HepG2 (cell line): ENCODE measurements at regions of chr11 and their contacts with region 1.

Region 1: GRCh38 chr11:119067371-119068222 is at the start of gene VPS11:
- DNase-seq: peak; percentile 92
- ATAC-seq: peak; percentile 98
- H3K4me3 ChIP-seq: peak within 1 kb of the TSS; percentile 97 to 98 (median 97)
- H3K27ac ChIP-seq: peak within 1 kb of the TSS; percentile 83
- H3K4me1 ChIP-seq: peaks cover 25% of the 10 kb centered on the region
- H3K27me3 ChIP-seq: no peaks in the 10 kb centered on the region; a peak in 1 of 5 replicates
- CTCF ChIP-seq: peak; percentile 12; the same call in 1 of the 2 replicates
- EP300 ChIP-seq: peak in 1 of 2 experiments; percentile 20; a peak in 1 of 4 replicates
- POLR2A ChIP-seq: peak; percentile 70 to 82
- RAD21 ChIP-seq: no peak
- total RNA-seq, gene VPS11: 21.6 and 23.3 TPM in 2 replicates

Region 2: GRCh38 chr11:119018074-119018938 is 49.3 kb before region 1 on chr11 and contains the starts of genes RPS25 and TRAPPC4:
- CTCF ChIA-PET with region 1: no interaction called
- POLR2A ChIA-PET with region 1: interaction called, 11 read pairs
- in situ Hi-C with region 1: no loop called
- intact Hi-C with region 1: no loop called
- DNase-seq: peak; percentile 93
- ATAC-seq: peak; percentile 88
- H3K4me3 ChIP-seq: peak within 1 kb of the TSS; percentile 72 to 99 (median 93)
- H3K27ac ChIP-seq: peak within 1 kb of the TSS; percentile 93
- H3K4me1 ChIP-seq: peaks cover 60% of the 10 kb centered on the region
- H3K27me3 ChIP-seq: peaks cover 0 to 4% of the 10 kb centered on the region in 2 experiments; a peak in 2 of 5 replicates
- CTCF ChIP-seq: peak; percentile 53
- EP300 ChIP-seq: peak in 1 of 2 experiments; percentile 41; a peak in 1 of 4 replicates
- POLR2A ChIP-seq: peak; percentile 86 to 88
- RAD21 ChIP-seq: 0 out of 2 replicates have a peak, but pooled peaks have one; percentile 4
- total RNA-seq, gene RPS25: 1,415 and 1,643 TPM in 2 replicates
- total RNA-seq, gene TRAPPC4: 97.4 and 124 TPM in 2 replicates

Region 3: GRCh38 chr11:119023741-119024140 is 43.9 kb before region 1 on chr11:
- CTCF ChIA-PET with region 1: no interaction called
- POLR2A ChIA-PET with region 1: interaction called, 11 read pairs
- in situ Hi-C with region 1: no loop called
- intact Hi-C with region 1: no loop called
- DNase-seq: no peak
- ATAC-seq: no peak
- H3K4me3 ChIP-seq: no peak overlapping the region
- H3K27ac ChIP-seq: peak overlapping the region; percentile 77
- H3K4me1 ChIP-seq: peaks cover 92% of the 10 kb centered on the region
- H3K27me3 ChIP-seq: peaks cover 0 to 3% of the 10 kb centered on the region in 2 experiments; a peak in 2 of 5 replicates
- CTCF ChIP-seq: no peak
- EP300 ChIP-seq: no peak
- POLR2A ChIP-seq: no peak
- RAD21 ChIP-seq: no peak

Region 4: DNA sequence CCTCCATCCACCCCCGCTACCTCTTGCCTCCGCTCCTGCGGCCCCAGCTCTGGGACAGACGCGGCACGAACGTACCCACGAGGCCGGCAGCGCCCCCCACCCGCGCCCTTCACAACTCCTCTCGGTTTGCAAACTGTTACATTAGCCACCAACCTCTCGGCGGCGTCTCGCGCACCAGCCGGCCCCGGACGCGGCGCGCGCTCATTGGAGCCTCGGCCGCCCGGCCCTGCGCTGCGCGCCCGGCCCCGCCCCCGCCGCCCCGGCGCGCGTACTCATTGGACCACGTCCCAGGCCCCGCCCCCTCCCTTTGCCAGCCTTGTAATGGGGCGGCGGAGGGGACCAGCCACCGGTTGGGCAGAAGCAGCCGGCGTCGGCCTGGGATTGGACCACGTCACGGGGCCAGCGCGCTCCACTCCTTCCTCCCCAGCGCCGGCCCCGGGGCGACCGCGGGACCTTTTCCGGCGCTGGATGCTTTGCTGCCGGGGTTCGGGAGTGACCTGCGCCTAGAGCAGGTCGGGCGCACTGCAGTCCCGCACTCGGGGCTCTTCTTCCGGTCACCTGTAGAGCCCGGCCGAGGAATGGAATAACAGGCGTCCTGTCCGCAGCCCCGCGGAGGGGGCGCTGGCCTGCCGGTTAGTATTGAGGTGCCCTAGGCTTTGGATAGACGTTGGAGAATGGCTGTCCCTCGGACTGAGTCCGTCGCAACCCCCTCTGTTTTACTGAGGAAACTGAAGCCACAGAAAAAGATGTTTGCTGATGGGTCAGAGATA is 10.4 kb before region 1 on chr11 and contains the start of gene HYOU1:
- CTCF ChIA-PET with region 1: no interaction called
- POLR2A ChIA-PET with region 1: interaction called, 20 read pairs
- in situ Hi-C with region 1: no loop called
- intact Hi-C with region 1: loop called (anchors 1 kb)
- DNase-seq: peak; percentile 93
- ATAC-seq: peak; percentile 92
- H3K4me3 ChIP-seq: peak within 1 kb of the TSS; percentile 75 to 87 (median 82)
- H3K27ac ChIP-seq: peak within 1 kb of the TSS; percentile 88
- H3K4me1 ChIP-seq: peaks cover 23% of the 10 kb centered on the region
- H3K27me3 ChIP-seq: no peaks in the 10 kb centered on the region
- CTCF ChIP-seq: peak; percentile 51; the same call in 1 of the 2 replicates
- EP300 ChIP-seq: no peak
- POLR2A ChIP-seq: peak; percentile 72 to 75
- RAD21 ChIP-seq: peak; percentile 55
- total RNA-seq, gene HYOU1: 50.0 and 127 TPM in 2 replicates

Region 5: GRCh38 chr11:119084663-119085436 is 17.3 kb after region 1 on chr11 and contains the start of gene HMBS:
- CTCF ChIA-PET with region 1: no interaction called
- POLR2A ChIA-PET with region 1: interaction called, 90 read pairs
- in situ Hi-C with region 1: no loop called
- intact Hi-C with region 1: no loop called
- DNase-seq: peak; percentile 92
- ATAC-seq: peak; percentile 89
- H3K4me3 ChIP-seq: peak within 1 kb of the TSS; percentile 71 to 93 (median 77)
- H3K27ac ChIP-seq: peak within 1 kb of the TSS; percentile 98
- H3K4me1 ChIP-seq: peaks cover 30% of the 10 kb centered on the region
- H3K27me3 ChIP-seq: no peaks in the 10 kb centered on the region; a peak in 1 of 5 replicates
- CTCF ChIP-seq: no peak
- EP300 ChIP-seq: no peak
- POLR2A ChIP-seq: peak; percentile 83 to 93
- RAD21 ChIP-seq: peak; percentile 45; the same call in 1 of the 2 replicates
- total RNA-seq, gene HMBS: 9.4 and 14.0 TPM in 2 replicates

Region 6: DNA sequence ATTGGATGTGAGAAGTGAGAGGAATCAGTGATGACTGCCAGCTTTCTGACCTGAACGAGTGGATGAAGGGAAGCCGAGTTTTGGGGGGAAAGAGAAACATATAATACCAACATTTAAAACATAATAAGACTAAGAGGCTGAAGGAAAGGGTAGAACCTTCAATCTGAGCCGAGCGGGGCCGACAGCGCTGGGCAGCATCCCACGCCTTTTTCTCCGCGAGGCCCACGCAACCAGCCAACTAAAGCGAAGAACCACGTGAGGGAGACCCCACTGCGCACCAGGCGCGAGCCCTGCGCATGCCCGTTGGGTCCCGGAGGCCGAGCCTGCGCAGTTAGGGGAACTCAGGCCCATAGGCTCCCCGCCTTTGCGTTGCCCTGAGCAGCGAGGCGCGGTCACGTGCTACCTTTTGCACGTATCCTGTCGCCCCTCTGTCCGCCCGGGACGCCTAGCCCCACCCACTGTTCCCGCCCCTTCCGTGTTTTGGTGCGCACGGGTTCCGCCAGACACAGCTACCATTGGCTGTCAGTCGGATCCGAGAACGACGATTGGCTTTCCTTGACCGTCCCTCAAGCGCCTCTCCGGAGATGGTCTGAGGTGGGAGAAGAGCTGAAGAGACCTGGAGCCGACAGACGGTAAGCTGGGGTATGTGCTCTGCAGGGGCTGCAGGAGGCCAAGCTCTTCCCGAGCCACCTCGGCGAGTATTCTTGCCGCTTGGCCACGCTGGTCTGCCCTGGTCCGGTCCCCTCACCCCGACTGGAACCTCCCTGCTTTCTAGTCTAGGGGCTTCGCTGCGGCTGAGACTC is 53.6 kb after region 1 on chr11 and contains the start of gene HINFP:
- CTCF ChIA-PET with region 1: no interaction called
- POLR2A ChIA-PET with region 1: interaction called, 15 read pairs
- in situ Hi-C with region 1: no loop called
- intact Hi-C with region 1: no loop called
- DNase-seq: peak; percentile 97
- ATAC-seq: peak; percentile 98
- H3K4me3 ChIP-seq: peak within 1 kb of the TSS; percentile 81 to 98 (median 84)
- H3K27ac ChIP-seq: peak within 1 kb of the TSS; percentile 55
- H3K4me1 ChIP-seq: peaks cover 36% of the 10 kb centered on the region
- H3K27me3 ChIP-seq: no peaks in the 10 kb centered on the region; a peak in 1 of 5 replicates
- CTCF ChIP-seq: no peak; the same call in 1 of the 2 replicates
- EP300 ChIP-seq: no peak
- POLR2A ChIP-seq: peak; percentile 65 to 84
- RAD21 ChIP-seq: 0 out of 2 replicates have a peak, but pooled peaks have one; percentile 20
- total RNA-seq, gene HINFP: 13.3 and 15.1 TPM in 2 replicates